ENCODE measurements at regions of chr12 and their contacts with region 1.

Region 1: DNA sequence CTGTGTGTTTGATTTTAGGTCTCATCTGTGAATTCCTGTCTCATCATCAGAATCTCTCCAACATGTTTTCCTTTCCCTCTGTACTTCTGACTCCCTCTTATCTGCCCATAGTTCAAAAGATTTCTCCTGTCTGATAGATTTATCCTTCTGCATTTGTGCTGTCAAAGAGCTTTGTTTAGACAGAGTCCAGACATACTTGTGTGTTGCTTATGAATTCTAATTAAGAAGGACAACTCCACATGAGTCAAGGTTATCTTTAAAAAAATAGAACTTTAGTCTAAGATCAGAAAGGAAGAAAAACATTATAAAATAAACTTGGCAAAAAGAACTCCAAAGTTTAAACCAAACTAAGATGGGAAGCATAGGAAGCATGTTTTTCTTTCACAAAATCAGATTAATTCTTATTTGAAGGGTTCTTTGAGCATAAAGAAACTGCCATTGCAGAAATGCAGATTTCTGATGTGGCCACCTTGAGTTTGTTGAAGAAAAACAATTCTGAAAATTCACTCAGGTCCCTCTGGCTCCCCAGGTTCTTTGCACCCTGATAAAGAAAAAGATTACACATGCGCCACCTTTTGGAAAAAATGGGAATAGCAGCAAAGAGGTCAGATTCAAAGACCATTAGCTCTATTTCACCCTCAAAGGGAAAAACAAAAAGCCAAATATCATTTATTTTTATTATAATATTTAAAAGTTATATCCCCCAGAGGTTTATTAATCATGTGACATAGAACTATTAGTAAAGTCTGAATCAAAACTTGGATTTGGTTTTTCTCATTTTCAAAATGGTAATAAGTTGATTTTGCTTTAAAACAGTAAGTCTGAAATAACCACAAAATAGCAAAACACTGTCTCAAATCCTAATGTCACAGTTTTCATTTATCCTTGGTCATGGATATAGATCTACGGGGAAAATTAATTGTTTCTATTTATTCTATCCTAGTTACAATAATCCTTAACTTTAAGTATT is 143.7 kb upstream of the DCN start:
- DNase-seq: peak; percentile 19
- H3K4me3 ChIP-seq: no peak overlapping the region
- H3K27ac ChIP-seq: peak overlapping the region; percentile 1 to 29 (median 12)
- H3K4me1 ChIP-seq: no peaks in the 10 kb centered on the region
- H3K27me3 ChIP-seq: no peaks in the 10 kb centered on the region
- CTCF ChIP-seq: peak; percentile 68 to 86 (median 72)
- EP300 ChIP-seq: no peak
- POLR2A ChIP-seq: no peak

Region 2: GRCh38 chr12:90959538-90960139 is 366.7 kb before region 1 on chr12:
- in situ Hi-C with region 1: loop called in 1 of 4 experiments (anchors 25 kb)
- intact Hi-C with region 1: no loop called
- DNase-seq: no peak
- H3K4me3 ChIP-seq: no peak overlapping the region
- H3K27ac ChIP-seq: no peak overlapping the region
- H3K4me1 ChIP-seq: no peaks in the 10 kb centered on the region
- H3K27me3 ChIP-seq: no peaks in the 10 kb centered on the region
- CTCF ChIP-seq: peak; percentile 30 to 66 (median 59)
- EP300 ChIP-seq: no peak
- POLR2A ChIP-seq: no peak

Region 3: GRCh38 chr12:90987520-90987919 is 338.8 kb before region 1 on chr12:
- in situ Hi-C with region 1: loop called in 1 of 4 experiments (anchors 10 kb)
- intact Hi-C with region 1: no loop called
- DNase-seq: no peak
- H3K4me3 ChIP-seq: no peak overlapping the region
- H3K27ac ChIP-seq: no peak overlapping the region
- H3K4me1 ChIP-seq: no peaks in the 10 kb centered on the region
- H3K27me3 ChIP-seq: no peaks in the 10 kb centered on the region
- CTCF ChIP-seq: no peak
- EP300 ChIP-seq: no peak
- POLR2A ChIP-seq: no peak

Region 4: GRCh38 chr12:91178139-91178561 is 148.2 kb before region 1 on chr12:
- in situ Hi-C with region 1: loop called in 3 of 4 experiments (anchors 5 to 25 kb)
- intact Hi-C with region 1: loop called (anchors 10 kb)
- DNase-seq: no peak
- H3K4me3 ChIP-seq: peak overlapping the region in 3 of 4 donors; percentile 11 to 39 (median 15)
- H3K27ac ChIP-seq: peak overlapping the region; percentile 58 to 77 (median 72)
- H3K4me1 ChIP-seq: peaks cover 0 to 4% (median 2%) of the 10 kb centered on the region in 4 donors
- H3K27me3 ChIP-seq: no peaks in the 10 kb centered on the region
- CTCF ChIP-seq: peak; percentile 47 to 52 (median 51)
- EP300 ChIP-seq: no peak
- POLR2A ChIP-seq: no peak

Region 5: DNA sequence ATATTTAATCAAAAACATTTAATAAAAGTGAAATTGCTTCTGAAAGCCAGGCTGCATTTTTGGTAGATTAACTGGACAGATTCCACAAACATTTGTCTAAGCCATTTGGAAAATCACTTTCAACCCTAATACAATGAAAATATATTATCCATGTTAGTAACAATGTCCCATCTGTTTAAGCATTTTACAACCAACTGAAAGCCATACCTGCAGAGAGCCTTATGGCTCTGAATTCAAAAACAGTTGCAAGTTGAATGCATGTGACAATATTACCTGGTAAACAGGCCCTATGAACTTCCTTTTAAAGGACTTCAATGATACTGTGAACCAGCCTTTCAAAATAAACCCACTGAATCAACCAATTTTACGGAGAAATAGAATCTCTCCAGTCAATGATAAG is 351.2 kb after region 1 on chr12:
- in situ Hi-C with region 1: no loop called
- intact Hi-C with region 1: no loop called
- DNase-seq: no peak
- H3K4me3 ChIP-seq: no peak overlapping the region
- H3K27ac ChIP-seq: no peak overlapping the region
- H3K4me1 ChIP-seq: no peaks in the 10 kb centered on the region
- H3K27me3 ChIP-seq: no peaks in the 10 kb centered on the region
- CTCF ChIP-seq: no peak
- EP300 ChIP-seq: no peak
- POLR2A ChIP-seq: no peak